ENCODE measurements at regions of chr7 and their contacts with region 1.

Region 1: GRCh38 chr7:148485618-148486017 is 104.9 kb upstream of the C7orf33 start:
- DNase-seq: peak; percentile 8
- H3K4me3 Mint-ChIP-seq: no peak overlapping the region
- H3K27ac Mint-ChIP-seq: no peak overlapping the region
- H3K4me1 Mint-ChIP-seq: no peaks in the 10 kb centered on the region
- H3K27me3 Mint-ChIP-seq: no peaks in the 10 kb centered on the region
- CTCF ChIP-seq: no peak

Region 2: GRCh38 chr7:148286150-148286549 is 199.5 kb before region 1 on chr7:
- CTCF ChIA-PET with region 1: interaction called, 91 read pairs
- POLR2A ChIA-PET with region 1: interaction called, 3 read pairs
- intact Hi-C with region 1: loop called (anchors 1 kb)
- DNase-seq: peak; percentile 44
- H3K4me3 Mint-ChIP-seq: no peak overlapping the region
- H3K27ac Mint-ChIP-seq: no peak overlapping the region
- H3K4me1 Mint-ChIP-seq: no peaks in the 10 kb centered on the region
- H3K27me3 Mint-ChIP-seq: peaks cover 22% of the 10 kb centered on the region
- CTCF ChIP-seq: peak; percentile 47

Region 3: DNA sequence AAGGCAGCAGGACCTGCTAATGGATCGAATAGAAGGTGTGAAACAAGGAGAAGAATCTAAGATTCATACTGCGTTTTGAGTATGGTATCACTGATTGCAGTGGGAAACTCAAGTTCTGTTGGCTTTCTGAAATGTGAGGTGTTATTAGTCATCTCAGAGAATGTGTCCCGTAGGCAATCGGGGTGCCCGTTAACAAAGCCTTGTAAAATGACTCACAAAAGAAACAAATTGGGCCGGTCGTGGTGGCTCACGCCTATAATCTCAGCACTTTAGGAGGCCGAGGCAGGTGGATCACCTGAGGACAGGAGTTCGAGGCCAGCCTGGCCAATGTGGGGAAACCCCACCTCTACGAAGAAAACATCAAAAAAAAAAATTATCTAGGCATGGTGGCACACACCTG is 13.2 kb before region 1 on chr7:
- CTCF ChIA-PET with region 1: interaction called, 10 read pairs
- POLR2A ChIA-PET with region 1: interaction called, 3 read pairs
- intact Hi-C with region 1: no loop called
- DNase-seq: peak; percentile 71
- H3K4me3 Mint-ChIP-seq: no peak overlapping the region
- H3K27ac Mint-ChIP-seq: no peak overlapping the region
- H3K4me1 Mint-ChIP-seq: peaks cover 8% of the 10 kb centered on the region
- H3K27me3 Mint-ChIP-seq: peaks cover 16% of the 10 kb centered on the region
- CTCF ChIP-seq: no peak